ENCODE measurements at regions of chr1 and their contacts with region 1.

Region 1: DNA sequence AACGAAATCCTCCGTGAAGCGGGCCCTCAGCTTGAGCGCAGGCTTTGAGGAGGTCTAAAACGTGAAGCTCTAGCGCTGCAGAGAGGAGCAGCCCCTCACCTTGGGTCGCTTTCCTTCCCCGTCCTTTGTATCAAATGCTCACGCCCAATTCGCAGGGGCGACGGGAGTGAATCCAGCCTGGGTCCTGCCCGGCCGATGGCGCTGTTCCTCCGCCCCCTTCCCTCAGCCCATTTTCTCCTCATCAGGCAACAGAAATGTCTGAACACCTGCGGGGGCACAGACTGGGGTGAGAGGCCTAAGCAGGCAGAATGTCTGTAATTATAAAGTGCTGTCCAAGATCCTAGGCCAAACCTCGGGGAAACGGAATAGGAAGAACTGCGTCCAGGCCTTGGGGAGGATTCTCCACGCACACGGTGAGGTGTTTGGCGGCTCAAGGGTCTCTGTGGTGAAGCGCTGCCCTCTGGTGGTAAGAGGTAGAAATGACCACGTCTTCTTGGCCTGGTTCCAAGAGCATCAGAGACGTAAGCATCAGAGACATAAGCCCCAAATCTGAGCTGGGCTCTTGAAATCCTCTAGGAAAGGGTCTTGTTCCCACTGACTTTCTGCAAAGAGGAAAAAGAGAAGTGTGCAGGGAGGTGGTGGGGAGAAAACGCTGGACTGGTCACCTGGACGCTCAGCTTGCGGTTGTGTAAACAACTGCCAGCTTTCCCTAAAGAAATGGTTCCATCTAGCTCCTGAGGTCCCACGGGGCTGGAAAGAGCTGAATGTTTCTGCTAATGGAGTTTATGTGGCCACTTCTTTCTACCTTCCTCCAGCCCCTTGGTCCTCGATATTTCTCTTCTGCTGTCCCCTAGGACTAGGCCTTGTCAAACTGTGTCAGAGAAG is 92.1 kb upstream of the CD53 start:
- DNase-seq: peak; percentile 59 to 88 (median 76)
- ATAC-seq: peak; percentile 81
- H3K4me3 ChIP-seq: no peak overlapping the region
- H3K4me3 Mint-ChIP-seq: no peak overlapping the region
- H3K27ac ChIP-seq: no peak overlapping the region
- H3K27ac Mint-ChIP-seq: no peak overlapping the region
- H3K4me1 ChIP-seq: peaks cover 39% of the 10 kb centered on the region
- H3K4me1 Mint-ChIP-seq: peaks cover 46% of the 10 kb centered on the region
- H3K27me3 ChIP-seq: no peaks in the 10 kb centered on the region
- H3K27me3 Mint-ChIP-seq: peaks cover 5% of the 10 kb centered on the region
- CTCF ChIP-seq: peak; percentile 81

Region 2: DNA sequence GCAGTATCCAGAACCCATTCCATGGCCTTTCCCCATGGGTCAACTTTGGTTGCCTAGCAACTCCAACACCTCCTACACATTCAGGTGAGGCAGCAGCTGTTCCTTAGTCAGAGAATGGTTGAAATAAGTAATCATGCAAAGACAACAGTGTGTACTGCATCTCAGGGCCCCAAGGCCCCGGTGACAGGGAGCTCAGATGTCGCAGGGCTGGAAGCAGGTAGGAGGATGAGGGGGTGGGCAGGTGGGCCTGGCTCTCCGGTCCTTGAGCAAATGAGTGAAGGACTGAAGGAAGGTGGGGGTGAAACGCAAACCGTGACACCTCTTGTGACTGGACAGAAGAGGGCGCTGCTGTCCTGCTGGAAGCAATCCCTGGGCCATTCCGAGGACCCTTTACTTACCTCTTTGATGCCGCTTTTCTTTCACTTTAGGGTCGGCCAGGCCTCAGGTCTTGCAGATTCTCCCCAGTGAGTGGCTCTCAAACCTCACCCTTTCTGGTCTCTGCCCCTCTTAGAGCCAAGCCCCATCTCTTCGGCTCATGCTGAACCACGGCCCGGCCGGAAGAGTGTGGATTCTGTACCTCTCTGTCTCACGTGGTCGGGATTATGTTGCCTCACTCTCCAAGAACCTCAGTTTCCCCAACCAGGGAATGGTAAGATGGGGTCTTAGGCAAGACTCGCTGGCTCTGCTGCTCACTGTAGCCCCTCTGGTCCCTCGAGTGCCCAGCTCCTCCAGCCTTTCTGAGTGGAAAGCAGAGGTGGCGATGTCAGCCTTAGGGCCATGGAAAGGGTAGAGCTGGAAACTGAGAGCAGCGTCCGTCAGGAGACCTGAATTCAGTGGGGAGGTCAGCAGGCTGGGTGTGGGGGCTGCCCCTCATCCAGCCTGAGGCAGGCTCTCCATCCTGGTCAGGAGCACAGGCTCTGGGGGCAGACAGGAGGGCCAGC is 256.3 kb before region 1 on chr1:
- CTCF ChIA-PET with region 1: interaction called, 34 read pairs
- POLR2A ChIA-PET with region 1: no interaction called
- intact Hi-C with region 1: loop called (anchors 1 kb)
- DNase-seq: peak; percentile 8 to 69 (median 44)
- ATAC-seq: peak; percentile 77
- H3K4me3 ChIP-seq: no peak overlapping the region
- H3K4me3 Mint-ChIP-seq: peak overlapping the region; percentile 22
- H3K27ac ChIP-seq: no peak overlapping the region
- H3K27ac Mint-ChIP-seq: no peak overlapping the region
- H3K4me1 ChIP-seq: peaks cover 6% of the 10 kb centered on the region
- H3K4me1 Mint-ChIP-seq: peaks cover 3% of the 10 kb centered on the region
- H3K27me3 ChIP-seq: no peaks in the 10 kb centered on the region
- H3K27me3 Mint-ChIP-seq: peaks cover 26% of the 10 kb centered on the region
- CTCF ChIP-seq: peak; percentile 64

Region 3: DNA sequence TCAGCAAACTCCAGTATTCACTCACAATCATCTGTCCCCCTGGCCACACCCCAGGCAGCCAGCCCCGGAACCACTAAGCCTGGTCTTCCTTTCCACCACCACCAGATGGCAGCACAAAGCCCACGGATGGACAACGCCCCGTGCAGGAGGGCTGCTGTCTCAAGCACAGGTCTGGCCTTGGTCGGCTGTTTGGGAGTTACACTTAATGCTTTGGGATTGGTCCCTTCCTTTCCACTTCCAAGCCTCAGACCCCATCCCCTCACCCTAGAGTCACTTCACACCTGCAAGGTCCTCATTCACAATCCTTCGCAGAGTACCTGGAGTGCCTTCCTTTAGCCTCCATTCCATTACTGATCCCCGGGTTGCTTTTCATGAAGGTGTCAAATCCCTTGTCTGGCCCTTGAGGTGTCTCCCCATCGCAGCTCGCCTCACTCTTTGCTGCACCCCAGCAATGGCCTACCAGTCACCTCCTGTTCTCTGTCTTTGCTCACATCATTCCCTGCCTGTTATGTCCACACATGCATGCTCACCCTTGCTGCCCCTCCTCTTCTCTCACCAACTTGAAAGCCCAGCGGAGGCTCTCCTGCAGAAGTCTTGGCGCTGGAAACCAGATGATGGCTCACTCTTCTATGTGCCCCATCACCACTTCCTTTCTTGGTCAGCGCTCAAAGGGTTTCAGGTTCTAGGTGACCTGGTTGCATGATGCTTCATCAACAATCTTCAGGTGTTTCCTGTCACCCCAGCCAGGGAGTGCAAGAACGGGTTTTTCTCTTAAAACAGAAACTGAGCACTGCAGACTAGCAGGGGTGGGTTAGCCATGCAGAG is 149.8 kb before region 1 on chr1:
- CTCF ChIA-PET with region 1: interaction called, 30 read pairs
- POLR2A ChIA-PET with region 1: no interaction called
- intact Hi-C with region 1: loop called (anchors 1 kb)
- DNase-seq: peak; percentile 66 to 94 (median 85)
- ATAC-seq: peak; percentile 72
- H3K4me3 ChIP-seq: peak overlapping the region; percentile 27
- H3K4me3 Mint-ChIP-seq: no peak overlapping the region
- H3K27ac ChIP-seq: peak overlapping the region; percentile 28 to 55
- H3K27ac Mint-ChIP-seq: no peak overlapping the region
- H3K4me1 ChIP-seq: peaks cover 55% of the 10 kb centered on the region
- H3K4me1 Mint-ChIP-seq: peaks cover 46% of the 10 kb centered on the region
- H3K27me3 ChIP-seq: no peaks in the 10 kb centered on the region
- H3K27me3 Mint-ChIP-seq: no peaks in the 10 kb centered on the region
- CTCF ChIP-seq: peak; percentile 70

Region 4: GRCh38 chr1:110710314-110710713 is 70.5 kb before region 1 on chr1:
- CTCF ChIA-PET with region 1: no interaction called
- POLR2A ChIA-PET with region 1: no interaction called
- intact Hi-C with region 1: no loop called
- DNase-seq: no peak
- ATAC-seq: no peak
- H3K4me3 ChIP-seq: no peak overlapping the region
- H3K4me3 Mint-ChIP-seq: no peak overlapping the region
- H3K27ac ChIP-seq: no peak overlapping the region
- H3K27ac Mint-ChIP-seq: no peak overlapping the region
- H3K4me1 ChIP-seq: no peaks in the 10 kb centered on the region
- H3K4me1 Mint-ChIP-seq: peaks cover 18% of the 10 kb centered on the region
- H3K27me3 ChIP-seq: no peaks in the 10 kb centered on the region
- H3K27me3 Mint-ChIP-seq: peaks cover 3% of the 10 kb centered on the region
- CTCF ChIP-seq: no peak

Region 5: GRCh38 chr1:110746579-110747160 is 34.2 kb before region 1 on chr1:
- CTCF ChIA-PET with region 1: no interaction called
- POLR2A ChIA-PET with region 1: no interaction called
- intact Hi-C with region 1: no loop called
- DNase-seq: peak; percentile 26 to 77 (median 60)
- ATAC-seq: peak; percentile 52
- H3K4me3 ChIP-seq: no peak overlapping the region
- H3K4me3 Mint-ChIP-seq: no peak overlapping the region
- H3K27ac ChIP-seq: no peak overlapping the region
- H3K27ac Mint-ChIP-seq: no peak overlapping the region
- H3K4me1 ChIP-seq: no peaks in the 10 kb centered on the region
- H3K4me1 Mint-ChIP-seq: no peaks in the 10 kb centered on the region
- H3K27me3 ChIP-seq: no peaks in the 10 kb centered on the region
- H3K27me3 Mint-ChIP-seq: peaks cover 25% of the 10 kb centered on the region
- CTCF ChIP-seq: no peak

Region 6: GRCh38 chr1:110798691-110799256 is 17.9 kb after region 1 on chr1:
- CTCF ChIA-PET with region 1: interaction called, 13 read pairs
- POLR2A ChIA-PET with region 1: no interaction called
- intact Hi-C with region 1: no loop called
- DNase-seq: no peak
- ATAC-seq: no peak
- H3K4me3 ChIP-seq: no peak overlapping the region
- H3K4me3 Mint-ChIP-seq: no peak overlapping the region
- H3K27ac ChIP-seq: no peak overlapping the region
- H3K27ac Mint-ChIP-seq: no peak overlapping the region
- H3K4me1 ChIP-seq: no peaks in the 10 kb centered on the region
- H3K4me1 Mint-ChIP-seq: peaks cover 2% of the 10 kb centered on the region
- H3K27me3 ChIP-seq: no peaks in the 10 kb centered on the region
- H3K27me3 Mint-ChIP-seq: no peaks in the 10 kb centered on the region
- CTCF ChIP-seq: no peak

Region 7: GRCh38 chr1:110963691-110964399 is 183.0 kb after region 1 on chr1 and contains the start of gene LRIF1:
- CTCF ChIA-PET with region 1: interaction called, 8 read pairs
- POLR2A ChIA-PET with region 1: interaction called, 3 read pairs
- intact Hi-C with region 1: loop called (anchors 1 to 5 kb)
- DNase-seq: peak; percentile 98 to 100 (median 100)
- ATAC-seq: peak; percentile 96
- H3K4me3 ChIP-seq: peak within 1 kb of the TSS; percentile 77 to 88
- H3K4me3 Mint-ChIP-seq: peak within 1 kb of the TSS; percentile 84
- H3K27ac ChIP-seq: peak within 1 kb of the TSS; percentile 98 to 99
- H3K27ac Mint-ChIP-seq: peak within 1 kb of the TSS; percentile 99
- H3K4me1 ChIP-seq: peaks cover 21% of the 10 kb centered on the region
- H3K4me1 Mint-ChIP-seq: peaks cover 33% of the 10 kb centered on the region
- H3K27me3 ChIP-seq: peaks cover 0 to 2% of the 10 kb centered on the region in 2 experiments
- H3K27me3 Mint-ChIP-seq: peaks cover 10% of the 10 kb centered on the region
- CTCF ChIP-seq: peak; percentile 59
- total RNA-seq, gene LRIF1: 1.8 to 1.9 TPM

Region 8: DNA sequence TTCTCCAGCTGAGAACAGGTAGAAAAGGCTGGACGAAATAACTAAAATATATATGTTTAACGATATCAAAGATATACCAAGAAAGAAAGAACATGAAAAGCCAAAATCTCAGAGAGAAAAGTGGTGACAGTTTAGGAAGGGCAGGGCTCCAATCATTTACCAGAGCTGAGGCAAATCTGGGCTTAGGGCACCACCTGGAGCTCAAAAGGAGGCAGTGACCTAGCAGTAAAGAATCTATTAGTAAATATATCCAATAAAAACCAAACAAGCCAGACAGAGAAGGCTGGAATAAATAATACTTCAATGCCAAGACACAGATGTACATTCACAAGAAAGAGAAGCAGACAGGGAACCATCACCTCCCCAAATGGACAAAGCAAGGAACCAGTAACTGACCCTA is 553.3 kb after region 1 on chr1:
- CTCF ChIA-PET with region 1: no interaction called
- POLR2A ChIA-PET with region 1: no interaction called
- intact Hi-C with region 1: loop called in 1 of 2 experiments (anchors 5 kb)
- DNase-seq: peak; percentile 19 to 82 (median 57)
- ATAC-seq: peak; percentile 87
- H3K4me3 ChIP-seq: no peak overlapping the region
- H3K4me3 Mint-ChIP-seq: no peak overlapping the region
- H3K27ac ChIP-seq: no peak overlapping the region
- H3K27ac Mint-ChIP-seq: no peak overlapping the region
- H3K4me1 ChIP-seq: no peaks in the 10 kb centered on the region
- H3K4me1 Mint-ChIP-seq: peaks cover 6% of the 10 kb centered on the region
- H3K27me3 ChIP-seq: no peaks in the 10 kb centered on the region
- H3K27me3 Mint-ChIP-seq: no peaks in the 10 kb centered on the region
- CTCF ChIP-seq: peak; percentile 73

Region 9: GRCh38 chr1:111516005-111516535 is 735.2 kb after region 1 on chr1:
- CTCF ChIA-PET with region 1: no interaction called
- POLR2A ChIA-PET with region 1: no interaction called
- intact Hi-C with region 1: no loop called
- DNase-seq: peak in 6 of 9 experiments; percentile 27 to 78 (median 61)
- ATAC-seq: peak; percentile 83
- H3K4me3 ChIP-seq: peak overlapping the region; percentile 50 to 58
- H3K4me3 Mint-ChIP-seq: peak overlapping the region; percentile 80
- H3K27ac ChIP-seq: no peak overlapping the region
- H3K27ac Mint-ChIP-seq: peak overlapping the region; percentile 70
- H3K4me1 ChIP-seq: peaks cover 54% of the 10 kb centered on the region
- H3K4me1 Mint-ChIP-seq: peaks cover 33% of the 10 kb centered on the region
- H3K27me3 ChIP-seq: no peaks in the 10 kb centered on the region
- H3K27me3 Mint-ChIP-seq: no peaks in the 10 kb centered on the region
- CTCF ChIP-seq: peak; percentile 43